ENCODE measurements at regions of chr4 and their contacts with region 1.

Region 1: GRCh38 chr4:95124906-95125504 is 367.2 kb downstream of the BMPR1B start:
- DNase-seq: peak in 1 of 2 experiments; percentile 8
- H3K4me3 ChIP-seq: no peak overlapping the region
- H3K27ac ChIP-seq: no peak overlapping the region
- H3K4me1 ChIP-seq: no peaks in the 10 kb centered on the region
- H3K27me3 ChIP-seq: no peaks in the 10 kb centered on the region
- CTCF ChIP-seq: peak; percentile 63

Region 2: GRCh38 chr4:94621491-94622080 is 503.4 kb before region 1 on chr4:
- CTCF ChIA-PET with region 1: no interaction called
- POLR2A ChIA-PET with region 1: no interaction called
- intact Hi-C with region 1: loop called (anchors 5 kb)
- DNase-seq: peak in 1 of 2 experiments; percentile 40
- H3K4me3 ChIP-seq: no peak overlapping the region
- H3K27ac ChIP-seq: no peak overlapping the region
- H3K4me1 ChIP-seq: no peaks in the 10 kb centered on the region
- H3K27me3 ChIP-seq: no peaks in the 10 kb centered on the region
- CTCF ChIP-seq: peak; percentile 76

Region 3: GRCh38 chr4:95394752-95395306 is 269.8 kb after region 1 on chr4:
- CTCF ChIA-PET with region 1: no interaction called
- POLR2A ChIA-PET with region 1: no interaction called
- intact Hi-C with region 1: no loop called
- DNase-seq: no peak
- H3K4me3 ChIP-seq: no peak overlapping the region
- H3K27ac ChIP-seq: no peak overlapping the region
- H3K4me1 ChIP-seq: no peaks in the 10 kb centered on the region
- H3K27me3 ChIP-seq: no peaks in the 10 kb centered on the region
- CTCF ChIP-seq: no peak